Heart right ventricle (tissue), 16 donors: ENCODE measurements at regions of chr11 and their contacts with region 1.

Region 1: GRCh38 chr11:1298695-1299492 is 10.5 kb downstream of the TOLLIP start:
- DNase-seq: peak; percentile 43 to 73
- ATAC-seq: peak; percentile 69 to 92 (median 76)
- H3K4me3 ChIP-seq: no peak overlapping the region
- H3K27ac ChIP-seq: peak overlapping the region in 7 of 10 donors; percentile 7 to 55 (median 41)
- H3K4me1 ChIP-seq: peaks cover 11 to 53% (median 36%) of the 10 kb centered on the region in 9 donors
- H3K27me3 ChIP-seq: no peaks in the 10 kb centered on the region
- CTCF ChIP-seq: no peak

Region 2: GRCh38 chr11:1153951-1154493 is 144.9 kb before region 1 on chr11:
- intact Hi-C with region 1: no loop called
- DNase-seq: peak in 1 of 2 donors; percentile 26
- ATAC-seq: peak in 6 of 8 donors; percentile 36 to 83 (median 52)
- H3K4me3 ChIP-seq: no peak overlapping the region
- H3K27ac ChIP-seq: peak overlapping the region in 1 of 10 donors; percentile 70
- H3K4me1 ChIP-seq: peaks cover 0 to 8% (median 0%) of the 10 kb centered on the region in 9 donors
- H3K27me3 ChIP-seq: peaks cover 0 to 6% (median 0%) of the 10 kb centered on the region in 7 donors
- CTCF ChIP-seq: no peak

Region 3: DNA sequence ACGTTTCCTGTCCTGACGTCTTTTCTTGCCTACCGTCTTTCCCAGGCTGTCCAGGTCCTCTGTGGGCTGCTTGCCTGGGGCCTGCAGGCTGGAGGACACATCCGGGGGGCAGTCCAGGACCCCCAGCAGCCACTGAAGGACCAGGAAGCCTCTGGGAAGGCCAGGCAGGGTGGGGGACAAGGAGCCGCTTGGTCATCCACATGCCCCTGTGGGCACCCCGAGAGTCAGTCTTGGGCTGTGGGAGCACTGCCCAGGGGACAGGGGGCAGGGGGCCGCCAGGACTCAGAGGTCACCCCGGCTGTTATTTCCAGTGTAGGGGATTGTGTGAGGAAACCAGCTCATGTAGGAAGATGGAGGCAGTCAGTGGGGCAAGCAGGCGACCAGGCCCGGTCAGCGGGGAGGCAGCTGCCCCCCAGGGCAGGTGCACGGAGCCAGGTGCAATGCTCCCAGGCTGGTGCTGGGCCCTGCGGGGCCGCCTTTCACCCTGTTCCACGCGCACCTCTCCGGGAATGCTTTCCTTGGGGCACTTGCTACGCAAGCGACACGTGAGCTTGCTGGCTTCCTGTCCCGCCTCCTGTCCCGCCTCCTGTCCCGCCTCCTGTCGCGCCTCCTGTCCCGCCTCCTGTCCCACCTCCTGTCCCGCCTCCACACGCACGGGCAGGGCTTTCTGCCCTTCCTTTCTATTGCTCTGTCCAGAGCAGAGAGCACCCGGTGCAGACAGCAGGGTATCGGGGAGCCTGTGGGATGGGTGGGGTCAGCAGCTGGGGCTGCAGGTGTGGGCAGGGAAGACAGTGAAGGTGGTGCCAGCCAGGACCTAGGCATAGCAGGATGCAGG is 36.5 kb before region 1 on chr11:
- intact Hi-C with region 1: no loop called
- DNase-seq: peak; percentile 89 to 92
- ATAC-seq: peak; percentile 91 to 97 (median 96)
- H3K4me3 ChIP-seq: peak overlapping the region; percentile 32 to 62 (median 54)
- H3K27ac ChIP-seq: peak overlapping the region in 9 of 10 donors; percentile 73 to 85 (median 79)
- H3K4me1 ChIP-seq: peaks cover 4 to 17% (median 14%) of the 10 kb centered on the region in 9 donors
- H3K27me3 ChIP-seq: no peaks in the 10 kb centered on the region
- CTCF ChIP-seq: no peak

Region 4: GRCh38 chr11:1532014-1532586 is 233.2 kb after region 1 on chr11:
- intact Hi-C with region 1: loop called in 2 of 10 experiments (anchors 5 to 10 kb)
- DNase-seq: peak; percentile 69 to 72
- ATAC-seq: peak; percentile 86 to 92 (median 87)
- H3K4me3 ChIP-seq: peak overlapping the region in 1 of 10 donors; percentile 14
- H3K27ac ChIP-seq: peak overlapping the region; percentile 47 to 88 (median 74)
- H3K4me1 ChIP-seq: peaks cover 49 to 100% (median 94%) of the 10 kb centered on the region in 9 donors
- H3K27me3 ChIP-seq: no peaks in the 10 kb centered on the region
- CTCF ChIP-seq: peak in 1 of 9 donors; percentile 5